Naive thymus-derived CD4-positive, alpha-beta T cell (primary cell): ENCODE measurements at regions of chr10 and their contacts with region 1.

Region 1: GRCh38 chr10:60208676-60209269 is 180.9 kb downstream of the ANK3 start:
- DNase-seq: no peak
- ATAC-seq: no peak
- H3K4me3 ChIP-seq: no peak overlapping the region
- H3K4me3 Mint-ChIP-seq: no peak overlapping the region
- H3K27ac ChIP-seq: no peak overlapping the region
- H3K27ac Mint-ChIP-seq: peak overlapping the region in 1 of 9 donors; percentile 72
- H3K4me1 ChIP-seq: peaks cover 0 to 11% of the 10 kb centered on the region in 2 donors
- H3K4me1 Mint-ChIP-seq: peaks cover 12 to 37% (median 28%) of the 10 kb centered on the region in 7 donors
- H3K27me3 ChIP-seq: no peaks in the 10 kb centered on the region
- H3K27me3 Mint-ChIP-seq: no peaks in the 10 kb centered on the region

Region 2: GRCh38 chr10:60099998-60100747 is 108.6 kb before region 1 on chr10:
- CTCF ChIA-PET with region 1: no interaction called
- POLR2A ChIA-PET with region 1: no interaction called
- intact Hi-C with region 1: loop called in 1 of 2 experiments (anchors 2 kb)
- DNase-seq: peak in 6 of 9 donors; percentile 14 to 43 (median 31)
- ATAC-seq: peak; percentile 69
- H3K4me3 ChIP-seq: no peak overlapping the region
- H3K4me3 Mint-ChIP-seq: no peak overlapping the region
- H3K27ac ChIP-seq: no peak overlapping the region
- H3K27ac Mint-ChIP-seq: no peak overlapping the region
- H3K4me1 ChIP-seq: no peaks in the 10 kb centered on the region
- H3K4me1 Mint-ChIP-seq: no peaks in the 10 kb centered on the region
- H3K27me3 ChIP-seq: no peaks in the 10 kb centered on the region
- H3K27me3 Mint-ChIP-seq: no peaks in the 10 kb centered on the region

Region 3: GRCh38 chr10:60114765-60115586 is 93.8 kb before region 1 on chr10:
- CTCF ChIA-PET with region 1: no interaction called
- POLR2A ChIA-PET with region 1: no interaction called
- intact Hi-C with region 1: loop called (anchors 1 to 2 kb)
- DNase-seq: peak in 6 of 9 donors; percentile 1 to 58 (median 44)
- ATAC-seq: peak; percentile 54
- H3K4me3 ChIP-seq: no peak overlapping the region
- H3K4me3 Mint-ChIP-seq: no peak overlapping the region
- H3K27ac ChIP-seq: no peak overlapping the region
- H3K27ac Mint-ChIP-seq: no peak overlapping the region
- H3K4me1 ChIP-seq: no peaks in the 10 kb centered on the region
- H3K4me1 Mint-ChIP-seq: no peaks in the 10 kb centered on the region
- H3K27me3 ChIP-seq: no peaks in the 10 kb centered on the region
- H3K27me3 Mint-ChIP-seq: no peaks in the 10 kb centered on the region